Activated naive CD4-positive, alpha-beta T cell treated with anti-CD3 and anti-CD28 coated beads for 36 hours (primary cell): ENCODE measurements at regions of chr19 and their contacts with region 1.

Region 1: GRCh38 chr19:31214086-31214485 is 135.2 kb downstream of the TSHZ3 start:
- DNase-seq: peak; percentile 97
- H3K4me3 Mint-ChIP-seq: peak overlapping the region; percentile 60
- H3K27ac Mint-ChIP-seq: peak overlapping the region; percentile 99
- H3K4me1 Mint-ChIP-seq: peaks cover 40% of the 10 kb centered on the region
- H3K27me3 Mint-ChIP-seq: no peaks in the 10 kb centered on the region

Region 2: GRCh38 chr19:31548941-31549340 is 334.9 kb after region 1 on chr19:
- CTCF ChIA-PET with region 1: no interaction called
- intact Hi-C with region 1: no loop called
- DNase-seq: peak; percentile 7
- H3K4me3 Mint-ChIP-seq: no peak overlapping the region
- H3K27ac Mint-ChIP-seq: no peak overlapping the region
- H3K4me1 Mint-ChIP-seq: no peaks in the 10 kb centered on the region
- H3K27me3 Mint-ChIP-seq: no peaks in the 10 kb centered on the region

Region 3: DNA sequence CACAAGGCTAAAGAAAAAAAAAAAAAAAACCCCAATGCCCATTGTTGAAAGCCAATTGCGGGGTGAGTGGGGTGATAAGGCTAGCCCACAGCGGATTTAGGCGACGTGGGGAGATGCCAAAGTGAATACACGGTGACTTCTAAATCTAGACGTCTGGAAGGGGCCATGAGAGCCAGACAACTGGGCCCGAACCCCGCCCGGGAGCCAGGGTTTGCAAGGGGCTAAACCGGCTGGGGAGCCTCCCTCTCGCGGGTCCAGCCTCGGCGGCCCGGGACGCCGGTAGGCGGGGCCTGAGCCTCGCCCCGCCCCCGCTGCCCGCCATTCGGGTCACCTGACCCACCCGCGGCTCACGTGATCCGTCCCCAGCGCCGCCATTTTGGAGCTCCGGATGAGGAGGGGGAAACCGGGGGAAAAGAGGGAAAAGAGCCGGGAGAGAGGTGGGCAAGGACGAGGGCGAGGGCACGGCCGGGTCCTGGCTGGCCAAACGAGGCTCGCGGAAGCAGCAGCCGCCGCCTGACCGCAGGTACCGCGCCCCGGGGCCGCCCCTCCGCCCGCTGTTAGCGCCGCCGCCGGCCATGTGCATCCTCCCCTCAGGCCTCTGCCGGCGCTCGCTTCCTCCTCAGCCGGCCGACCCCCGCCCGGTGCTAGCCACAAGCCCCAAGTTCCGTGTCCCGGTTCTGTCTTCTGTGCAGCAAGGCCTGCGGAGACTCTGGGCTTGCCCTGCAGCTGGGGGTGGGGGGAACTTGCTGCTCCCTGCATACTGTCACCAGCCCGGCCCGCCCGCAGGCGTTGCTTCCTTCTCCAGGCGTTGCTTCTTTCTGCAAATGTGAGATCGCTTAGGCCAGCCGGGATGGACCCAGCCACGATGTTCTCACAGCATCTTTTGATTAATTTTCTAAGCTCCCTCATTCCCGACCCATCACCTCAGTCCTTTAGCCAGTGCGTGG is 1131.4 kb after region 1 on chr19 and contains the start of gene ZNF507:
- CTCF ChIA-PET with region 1: no interaction called
- intact Hi-C with region 1: loop called (anchors 1 kb)
- DNase-seq: peak; percentile 90
- H3K4me3 Mint-ChIP-seq: peak within 1 kb of the TSS; percentile 96
- H3K27ac Mint-ChIP-seq: peak within 1 kb of the TSS; percentile 89
- H3K4me1 Mint-ChIP-seq: peaks cover 34% of the 10 kb centered on the region
- H3K27me3 Mint-ChIP-seq: no peaks in the 10 kb centered on the region
- total RNA-seq, gene ZNF507: 21.4 to 21.5 TPM

Region 4: DNA sequence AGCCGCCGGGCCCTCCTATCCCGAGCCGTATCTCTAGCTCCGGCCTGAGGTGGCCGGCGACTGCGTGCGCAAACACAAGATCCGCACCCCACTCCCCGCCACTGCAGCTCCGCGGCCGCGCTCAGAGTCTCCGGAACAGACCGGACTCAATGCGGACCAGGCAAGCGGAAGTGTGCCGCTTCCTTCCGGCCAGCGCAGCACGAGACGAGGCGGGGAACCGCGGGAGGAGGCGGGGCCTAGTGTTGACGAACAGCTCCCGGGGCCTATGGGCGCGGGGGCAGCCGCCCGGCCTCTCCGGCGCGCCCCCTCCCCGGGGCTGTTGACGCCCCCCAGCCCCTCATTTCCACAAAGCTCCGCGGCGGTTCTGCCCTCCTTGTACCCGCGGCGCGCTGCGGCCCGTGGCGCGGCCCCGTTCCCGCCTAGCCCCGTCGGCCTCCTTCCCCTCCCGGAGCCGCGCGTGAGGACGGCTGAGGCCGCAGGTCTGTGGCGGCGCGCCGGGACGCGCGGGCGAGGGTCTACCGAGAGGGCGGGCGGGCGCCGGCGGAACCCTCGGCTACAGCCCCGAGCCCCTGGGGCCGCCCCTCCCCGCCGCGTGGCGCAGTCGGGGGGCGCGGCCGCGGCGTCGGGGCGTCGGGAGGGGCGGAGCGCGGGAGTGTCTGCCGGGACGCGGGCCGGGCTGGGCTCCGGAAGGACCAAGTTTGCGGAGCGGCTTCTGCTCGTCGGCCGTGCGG is 1191.5 kb after region 1 on chr19 and contains the start of gene DPY19L3:
- CTCF ChIA-PET with region 1: no interaction called
- intact Hi-C with region 1: loop called (anchors 10 kb)
- DNase-seq: peak; percentile 93
- H3K4me3 Mint-ChIP-seq: peak within 1 kb of the TSS; percentile 88
- H3K27ac Mint-ChIP-seq: peak within 1 kb of the TSS; percentile 90
- H3K4me1 Mint-ChIP-seq: peaks cover 19% of the 10 kb centered on the region
- H3K27me3 Mint-ChIP-seq: no peaks in the 10 kb centered on the region
- total RNA-seq, gene DPY19L3: 11.1 to 11.5 TPM